ENCODE measurements at regions of chr7 and their contacts with region 1.

Region 1: DNA sequence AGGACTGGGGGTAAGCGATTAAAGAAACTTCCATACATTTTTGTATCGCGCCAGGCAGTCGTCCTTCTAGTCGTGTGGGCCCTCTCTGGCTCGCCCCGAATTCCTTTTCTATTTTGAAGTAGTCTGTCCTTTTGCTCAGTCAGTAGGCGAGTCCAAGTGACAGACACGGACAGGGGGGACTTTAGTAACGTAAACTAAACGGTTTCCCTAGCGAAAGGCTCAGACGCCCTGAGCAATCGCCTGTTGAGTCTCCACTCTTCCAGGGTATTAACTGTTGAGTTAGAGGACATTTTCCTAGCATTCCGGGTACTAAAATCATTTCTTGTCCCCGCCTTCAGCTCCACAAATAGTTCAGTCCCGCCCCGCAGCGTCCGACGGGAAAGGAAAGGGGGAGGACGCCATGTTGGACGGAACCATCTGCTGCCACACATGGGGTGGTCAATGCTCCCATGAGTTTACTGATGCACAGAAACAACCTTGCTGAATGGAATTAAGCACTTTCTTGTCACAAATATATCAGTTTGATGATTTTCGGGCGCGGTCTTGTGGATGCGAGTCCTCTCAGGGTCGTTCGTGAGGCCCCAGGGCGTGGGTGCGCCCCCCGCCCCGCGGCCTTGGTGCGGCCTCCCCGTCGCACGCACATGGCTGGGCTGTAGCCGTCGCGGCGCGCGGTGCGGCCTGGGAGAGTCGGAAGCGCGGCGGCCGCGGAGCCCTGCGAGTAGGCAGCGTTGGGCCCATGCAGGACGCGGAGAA is at the start of gene EIF3B:
- DNase-seq: peak; percentile 94
- H3K4me3 ChIP-seq: peak within 1 kb of the TSS; percentile 79 to 86 (median 84)
- H3K27ac ChIP-seq: peak within 1 kb of the TSS; percentile 99
- H3K4me1 ChIP-seq: peaks cover 13% of the 10 kb centered on the region
- H3K27me3 ChIP-seq: no peaks in the 10 kb centered on the region
- CTCF ChIP-seq: no peak
- POLR2A ChIP-seq: peak; percentile 86
- total RNA-seq, gene EIF3B: 198 and 207 TPM in 2 replicates

Region 2: DNA sequence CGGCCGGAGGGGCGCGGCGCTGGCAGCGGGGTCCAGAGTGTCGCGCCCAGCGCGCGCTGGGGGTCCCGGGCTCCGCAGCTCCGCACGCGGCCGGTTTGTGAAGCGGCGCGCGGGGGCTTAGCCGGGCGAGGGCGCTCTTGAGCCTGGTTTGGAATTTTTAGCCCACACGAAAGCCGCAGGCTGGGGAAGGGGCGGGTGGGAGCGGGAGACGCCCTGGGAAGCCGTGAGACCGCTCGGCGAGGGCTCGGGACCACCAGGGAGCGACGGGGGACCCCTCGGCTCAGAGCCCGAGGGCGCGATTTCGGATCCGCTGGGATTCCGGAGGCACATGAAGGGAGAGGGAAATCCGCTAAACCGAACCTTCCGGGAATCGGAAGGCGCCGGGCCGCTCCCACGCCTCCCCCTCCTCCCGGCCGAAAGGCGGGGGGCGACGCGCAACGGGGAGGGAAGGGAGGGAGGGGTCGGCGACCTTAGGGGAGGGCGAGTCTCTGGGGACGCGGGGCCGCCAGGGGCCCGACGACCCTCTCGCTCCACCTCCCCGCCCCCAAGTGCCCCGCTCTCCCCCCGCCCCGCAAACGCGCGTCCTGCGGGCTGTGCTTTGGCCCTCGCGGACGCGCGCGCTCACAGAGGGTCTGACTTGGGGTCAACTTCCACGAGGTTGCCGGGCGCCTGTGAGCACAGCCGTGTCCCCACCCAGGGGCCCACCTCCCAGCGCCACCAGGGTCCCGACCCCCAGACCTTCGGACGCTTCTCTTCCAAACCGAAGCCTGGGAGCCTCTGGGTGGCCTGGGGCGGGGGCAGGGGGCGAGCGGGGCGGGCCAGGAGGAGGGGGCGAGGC is 689.4 kb before region 1 on chr7:
- CTCF ChIA-PET with region 1: interaction called, 3 read pairs
- POLR2A ChIA-PET with region 1: no interaction called
- dilution Hi-C with region 1: no loop called
- intact Hi-C with region 1: loop called (anchors 5 kb)
- DNase-seq: peak; percentile 66
- H3K4me3 ChIP-seq: peak overlapping the region; percentile 33 to 67 (median 43)
- H3K27ac ChIP-seq: no peak overlapping the region
- H3K4me1 ChIP-seq: peaks cover 3% of the 10 kb centered on the region
- H3K27me3 ChIP-seq: peaks cover 32 to 35% of the 10 kb centered on the region in 2 experiments
- CTCF ChIP-seq: peak; percentile 59 to 87
- POLR2A ChIP-seq: no peak

Region 3: DNA sequence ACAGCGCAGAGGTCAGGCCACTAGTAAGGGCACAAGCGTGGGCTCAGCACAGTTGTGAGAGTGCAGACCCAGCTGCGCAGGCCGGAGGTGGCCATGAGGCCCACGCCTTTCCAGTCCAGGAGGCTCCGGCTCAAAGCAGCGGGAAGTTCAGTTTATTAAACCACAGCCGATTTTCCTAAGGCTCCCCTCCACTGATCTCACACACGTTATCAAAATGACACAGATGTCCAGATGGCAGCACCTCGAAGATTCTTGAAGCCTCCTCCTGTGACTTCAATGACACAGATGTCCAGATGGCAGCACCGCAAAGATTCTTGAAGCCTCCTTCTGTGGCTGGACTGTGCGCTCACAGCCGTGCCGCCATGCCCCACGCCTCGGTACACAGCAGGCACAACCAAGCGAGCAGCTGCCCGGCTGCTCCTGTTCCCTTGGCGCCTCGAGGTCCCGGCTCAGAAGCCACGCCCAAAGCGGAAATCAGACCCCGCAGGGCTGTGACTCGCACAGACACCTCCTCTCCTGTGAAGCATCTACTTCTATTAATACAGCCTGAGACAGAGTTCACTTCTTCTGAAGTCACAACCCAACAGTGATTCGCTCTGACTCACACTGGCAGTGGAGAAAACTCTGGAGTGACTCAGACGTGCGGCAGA is 244.3 kb before region 1 on chr7:
- CTCF ChIA-PET with region 1: no interaction called
- POLR2A ChIA-PET with region 1: no interaction called
- dilution Hi-C with region 1: no loop called
- intact Hi-C with region 1: loop called (anchors 5 kb)
- DNase-seq: peak; percentile 86
- H3K4me3 ChIP-seq: peak overlapping the region in 1 of 3 experiments; percentile 14
- H3K27ac ChIP-seq: peak overlapping the region; percentile 72
- H3K4me1 ChIP-seq: peaks cover 44% of the 10 kb centered on the region
- H3K27me3 ChIP-seq: no peaks in the 10 kb centered on the region
- CTCF ChIP-seq: no peak
- POLR2A ChIP-seq: peak; percentile 31

Region 4: GRCh38 chr7:2248984-2249694 is 105.2 kb before region 1 on chr7:
- CTCF ChIA-PET with region 1: interaction called, 69 read pairs
- POLR2A ChIA-PET with region 1: interaction called, 3 read pairs
- dilution Hi-C with region 1: no loop called
- intact Hi-C with region 1: no loop called
- DNase-seq: peak; percentile 82
- H3K4me3 ChIP-seq: no peak overlapping the region
- H3K27ac ChIP-seq: peak overlapping the region; percentile 90
- H3K4me1 ChIP-seq: peaks cover 17% of the 10 kb centered on the region
- H3K27me3 ChIP-seq: no peaks in the 10 kb centered on the region
- CTCF ChIP-seq: no peak
- POLR2A ChIP-seq: peak; percentile 44

Region 5: GRCh38 chr7:2314209-2314955 is 40.0 kb before region 1 on chr7 and contains the start of gene SNX8:
- CTCF ChIA-PET with region 1: no interaction called
- POLR2A ChIA-PET with region 1: no interaction called
- dilution Hi-C with region 1: no loop called
- intact Hi-C with region 1: loop called (anchors 1 kb)
- DNase-seq: peak; percentile 81
- H3K4me3 ChIP-seq: peak within 1 kb of the TSS; percentile 58 to 90 (median 67)
- H3K27ac ChIP-seq: peak within 1 kb of the TSS; percentile 30
- H3K4me1 ChIP-seq: peaks cover 6% of the 10 kb centered on the region
- H3K27me3 ChIP-seq: no peaks in the 10 kb centered on the region
- CTCF ChIP-seq: no peak
- POLR2A ChIP-seq: peak; percentile 82
- total RNA-seq, gene SNX8: 41.4 and 50.3 TPM in 2 replicates

Region 6: DNA sequence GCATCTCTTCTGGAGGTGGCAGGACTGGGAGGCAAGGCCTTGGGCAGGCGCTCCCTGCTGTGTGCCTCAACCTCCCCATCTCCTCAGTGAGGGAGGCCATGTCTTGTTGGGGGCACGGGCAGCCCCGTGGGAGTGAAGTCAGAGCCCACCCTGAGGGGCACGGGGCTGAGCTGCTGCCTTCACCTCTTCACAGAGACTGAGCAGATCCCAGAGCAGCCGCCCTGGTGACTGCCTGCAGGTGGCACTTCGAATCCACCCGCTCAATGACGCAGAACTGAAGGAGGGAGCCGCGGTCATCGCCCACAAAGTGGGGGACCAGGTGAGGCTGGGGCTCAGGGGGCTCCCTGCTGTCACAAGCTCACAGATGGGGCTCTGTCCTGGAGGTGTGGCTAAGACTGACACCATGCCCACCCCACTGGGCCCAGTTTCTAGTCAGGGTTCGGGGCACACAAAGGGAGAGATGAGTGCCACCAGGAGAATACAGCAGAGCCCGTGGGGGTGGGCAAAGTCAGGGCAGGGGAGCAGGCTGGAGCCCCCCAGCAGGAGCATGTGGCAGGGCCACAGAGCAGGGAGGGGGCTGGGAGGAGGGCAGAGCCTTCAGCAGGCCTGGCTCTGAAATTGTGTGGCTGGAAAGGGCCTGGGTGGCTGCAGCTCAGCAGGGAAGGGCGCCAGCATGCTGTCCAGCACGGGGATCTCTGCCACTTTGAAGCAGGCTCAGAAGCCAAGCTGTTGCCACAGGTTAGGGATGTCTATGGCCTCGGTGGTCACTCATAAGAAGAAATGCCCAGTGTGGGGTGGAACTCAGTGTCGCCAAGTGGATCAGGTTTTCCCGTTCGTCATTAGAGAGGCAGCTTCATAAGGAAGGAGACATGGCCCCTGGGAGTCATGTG is 30.2 kb after region 1 on chr7:
- CTCF ChIA-PET with region 1: no interaction called
- POLR2A ChIA-PET with region 1: interaction called, 10 read pairs
- dilution Hi-C with region 1: no loop called
- intact Hi-C with region 1: no loop called
- DNase-seq: no peak
- H3K4me3 ChIP-seq: no peak overlapping the region
- H3K27ac ChIP-seq: no peak overlapping the region
- H3K4me1 ChIP-seq: no peaks in the 10 kb centered on the region
- H3K27me3 ChIP-seq: no peaks in the 10 kb centered on the region
- CTCF ChIP-seq: no peak
- POLR2A ChIP-seq: no peak

Region 7: GRCh38 chr7:2403014-2403717 is 48.8 kb after region 1 on chr7 and contains the start of gene CHST12:
- CTCF ChIA-PET with region 1: interaction called, 3 read pairs
- POLR2A ChIA-PET with region 1: interaction called, 3 read pairs
- dilution Hi-C with region 1: no loop called
- intact Hi-C with region 1: loop called (anchors 1 kb)
- DNase-seq: peak; percentile 94
- H3K4me3 ChIP-seq: peak within 1 kb of the TSS; percentile 68 to 75 (median 68)
- H3K27ac ChIP-seq: no peak within 1 kb of the TSS
- H3K4me1 ChIP-seq: peaks cover 24% of the 10 kb centered on the region
- H3K27me3 ChIP-seq: no peaks in the 10 kb centered on the region
- CTCF ChIP-seq: no peak
- POLR2A ChIP-seq: peak; percentile 66
- total RNA-seq, gene CHST12: 28.8 and 30.2 TPM in 2 replicates

Measured in endothelial cell of umbilical vein (primary cell).